ENCODE measurements at regions of chr3 and their contacts with region 1.

Region 1: DNA sequence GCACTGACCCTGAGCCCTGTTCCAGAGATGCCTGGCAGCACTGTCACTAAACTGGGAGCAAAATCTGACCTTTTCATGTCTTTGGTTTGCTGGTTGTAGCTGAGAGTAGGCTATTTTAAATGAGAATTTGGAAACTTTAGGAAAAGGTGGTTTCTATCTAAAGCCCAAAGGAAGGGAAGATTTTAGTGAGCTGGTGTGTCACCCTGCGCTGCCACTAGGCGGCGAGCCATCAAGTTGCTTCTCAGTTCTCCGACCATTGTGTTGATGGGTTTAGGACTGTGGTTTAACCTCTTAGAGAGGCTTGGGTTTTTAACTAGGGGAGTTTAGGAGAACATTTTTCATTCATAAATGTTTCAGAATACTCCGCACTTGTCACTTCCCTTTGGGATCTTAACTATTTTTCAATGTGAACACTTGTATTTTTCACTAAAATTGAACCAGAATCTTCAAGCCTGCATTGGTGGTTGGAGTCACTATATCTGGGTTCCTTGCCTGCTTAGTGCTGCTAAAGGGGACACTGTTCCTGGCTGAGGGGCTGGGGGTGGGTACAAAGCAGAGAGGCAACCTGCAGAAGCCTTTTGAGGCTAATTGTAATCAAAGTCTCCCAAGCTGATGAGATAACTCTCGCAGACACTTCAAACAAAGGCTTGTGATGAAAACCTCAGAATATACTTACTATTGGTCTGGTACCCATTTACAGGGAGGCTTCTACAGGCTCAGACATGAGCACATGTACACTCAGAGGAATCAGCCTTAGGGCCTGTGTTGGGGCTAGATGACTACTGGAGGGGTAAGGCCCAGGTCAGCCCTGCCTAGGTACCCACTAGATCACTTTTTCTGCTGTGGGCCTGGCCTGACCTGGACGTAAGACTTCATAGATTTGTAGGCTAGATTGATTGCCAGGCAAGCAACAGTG is 16.8 kb downstream of the EXOSC7 start:
- DNase-seq: no peak
- H3K4me3 ChIP-seq: no peak overlapping the region
- H3K27ac ChIP-seq: peak overlapping the region; percentile 55; the same call in 1 of the 2 replicates
- H3K4me1 ChIP-seq: peaks cover 23% of the 10 kb centered on the region
- H3K27me3 ChIP-seq: no peaks in the 10 kb centered on the region
- CTCF ChIP-seq: peak; percentile 69

Region 2: DNA sequence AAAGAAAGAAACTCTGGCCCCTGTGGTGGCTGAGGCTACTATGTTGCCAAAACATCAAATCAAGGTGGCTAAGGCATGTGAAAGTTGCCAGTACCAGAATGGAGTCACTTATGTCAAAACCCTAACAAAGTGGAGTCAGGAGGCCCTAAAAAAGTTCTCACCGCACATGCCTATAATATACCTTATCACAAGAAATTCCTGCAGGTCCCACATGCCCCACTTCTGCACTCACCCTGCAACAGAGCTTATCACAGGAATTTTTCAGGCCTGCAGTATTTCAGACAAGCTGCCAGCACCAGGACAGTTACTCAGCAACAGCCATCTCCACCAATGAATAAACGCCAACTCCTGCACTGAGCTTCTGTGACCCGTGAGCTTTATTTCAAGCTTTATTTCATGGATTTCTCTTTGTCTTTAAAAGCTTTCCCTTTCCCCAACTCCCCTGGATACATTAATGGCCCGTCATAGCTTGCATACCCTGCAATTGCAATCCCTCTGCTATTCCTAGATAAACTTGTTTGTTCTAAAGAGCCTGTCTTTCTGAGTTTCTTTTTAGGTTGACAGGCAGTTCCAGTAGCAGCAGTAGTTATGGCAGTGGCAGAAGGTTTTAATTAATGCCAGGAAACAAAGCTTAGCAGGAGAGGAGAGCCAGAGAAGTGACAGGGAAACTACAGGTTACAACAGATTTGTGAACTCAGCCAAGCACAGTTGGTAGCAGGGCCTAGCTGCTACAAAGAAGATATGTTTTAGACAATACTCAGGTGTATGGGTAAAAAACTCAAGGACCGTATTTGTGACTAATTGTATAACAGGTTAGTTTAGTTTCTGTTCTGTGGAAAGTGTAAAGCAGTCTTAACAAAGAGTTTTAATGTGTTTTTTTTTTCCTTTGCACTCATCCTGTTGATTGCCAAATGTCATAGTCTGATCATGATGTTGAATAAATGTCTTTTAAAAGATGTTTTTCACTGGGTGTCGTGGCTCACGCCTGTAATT is 147.0 kb before region 1 on chr3:
- CTCF ChIA-PET with region 1: no interaction called
- POLR2A ChIA-PET with region 1: interaction called, 37 read pairs
- intact Hi-C with region 1: no loop called
- DNase-seq: peak in 1 of 2 experiments; percentile 71
- H3K4me3 ChIP-seq: no peak overlapping the region
- H3K27ac ChIP-seq: peak overlapping the region; percentile 50
- H3K4me1 ChIP-seq: peaks cover 9% of the 10 kb centered on the region; the same call in 1 of the 2 replicates
- H3K27me3 ChIP-seq: no peaks in the 10 kb centered on the region
- CTCF ChIP-seq: no peak